Heart left ventricle (tissue), 16 donors: ENCODE measurements at regions of chr3 and their contacts with region 1.

Region 1: DNA sequence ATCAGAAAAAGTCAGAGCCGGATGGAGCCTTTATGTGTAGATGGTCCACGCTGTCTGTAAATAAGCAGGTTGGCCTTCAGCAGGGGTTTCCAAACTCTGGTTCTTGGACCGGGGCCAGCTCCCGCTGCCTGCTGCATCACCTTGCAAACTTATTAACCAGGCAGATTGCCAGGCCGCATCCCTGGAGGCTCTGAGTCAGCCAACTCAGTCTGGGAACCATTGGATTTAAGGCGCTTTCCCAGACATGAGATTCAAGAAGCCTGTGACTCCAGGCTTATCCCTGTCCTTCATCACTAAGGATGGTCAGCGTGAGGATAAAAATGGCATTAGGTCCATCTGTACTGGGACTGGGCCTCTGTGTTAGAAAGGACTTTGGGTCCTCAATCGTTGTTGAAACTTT is 212.5 kb downstream of the OPA1 start:
- DNase-seq: peak; percentile 87 to 92 (median 90)
- ATAC-seq: peak; percentile 64 to 94 (median 85)
- H3K4me3 ChIP-seq: no peak overlapping the region
- H3K27ac ChIP-seq: peak overlapping the region in 1 of 12 donors; percentile 16
- H3K4me1 ChIP-seq: peaks cover 0 to 16% (median 3%) of the 10 kb centered on the region in 12 donors
- H3K27me3 ChIP-seq: no peaks in the 10 kb centered on the region
- CTCF ChIP-seq: no peak
- POLR2A ChIP-seq: no peak

Region 2: GRCh38 chr3:193851941-193852674 is 46.6 kb after region 1 on chr3:
- intact Hi-C with region 1: loop called in 1 of 10 experiments (anchors 5 kb)
- DNase-seq: peak in 1 of 5 donors; percentile 42
- ATAC-seq: peak; percentile 47 to 58 (median 54)
- H3K4me3 ChIP-seq: no peak overlapping the region
- H3K27ac ChIP-seq: peak overlapping the region in 4 of 12 donors; percentile 11 to 32 (median 21)
- H3K4me1 ChIP-seq: peaks cover 0 to 29% (median 17%) of the 10 kb centered on the region in 12 donors
- H3K27me3 ChIP-seq: no peaks in the 10 kb centered on the region
- CTCF ChIP-seq: no peak
- POLR2A ChIP-seq: no peak

Region 3: GRCh38 chr3:193863657-193864357 is 58.3 kb after region 1 on chr3:
- intact Hi-C with region 1: loop called in 1 of 10 experiments (anchors 5 kb)
- DNase-seq: peak in 4 of 5 donors; percentile 50 to 67 (median 64)
- ATAC-seq: peak; percentile 85 to 92 (median 88)
- H3K4me3 ChIP-seq: no peak overlapping the region
- H3K27ac ChIP-seq: peak overlapping the region in 10 of 12 donors; percentile 3 to 71 (median 52)
- H3K4me1 ChIP-seq: peaks cover 0 to 46% (median 25%) of the 10 kb centered on the region in 12 donors
- H3K27me3 ChIP-seq: peaks cover 0 to under 1% (median 0%) of the 10 kb centered on the region in 9 donors
- CTCF ChIP-seq: no peak
- POLR2A ChIP-seq: no peak

Region 4: DNA sequence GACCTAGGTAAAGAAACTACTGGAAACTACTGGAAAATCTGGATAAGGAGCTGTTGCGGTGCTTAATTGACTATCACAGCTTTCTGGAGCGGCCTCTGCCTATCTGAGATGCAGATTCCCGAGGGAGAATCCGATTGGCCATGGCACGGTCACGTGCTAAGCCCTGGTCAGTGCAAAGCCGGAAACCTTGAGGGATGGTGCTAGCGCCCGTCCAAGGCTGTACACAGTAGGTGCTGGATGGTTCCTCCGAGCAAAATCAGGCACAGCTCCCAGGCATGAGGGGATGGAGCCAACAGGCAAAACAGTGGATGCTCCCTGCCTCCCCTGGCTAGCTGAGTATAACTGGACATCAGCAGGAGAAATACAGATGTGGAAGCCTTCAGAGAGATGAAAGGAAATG is 91.8 kb after region 1 on chr3:
- intact Hi-C with region 1: loop called in 1 of 10 experiments (anchors 5 kb)
- DNase-seq: peak in 4 of 5 donors; percentile 43 to 79 (median 55)
- ATAC-seq: peak in 3 of 4 donors; percentile 55 to 85 (median 74)
- H3K4me3 ChIP-seq: peak overlapping the region in 2 of 12 donors; percentile 15 to 16
- H3K27ac ChIP-seq: peak overlapping the region in 4 of 12 donors; percentile 2 to 34 (median 20)
- H3K4me1 ChIP-seq: peaks cover 0 to 26% (median 4%) of the 10 kb centered on the region in 12 donors
- H3K27me3 ChIP-seq: no peaks in the 10 kb centered on the region
- CTCF ChIP-seq: no peak
- POLR2A ChIP-seq: no peak

Region 5: GRCh38 chr3:194930377-194931204 is 1125.1 kb after region 1 on chr3:
- intact Hi-C with region 1: no loop called
- DNase-seq: peak in 4 of 5 donors; percentile 49 to 70 (median 58)
- ATAC-seq: peak; percentile 62 to 86 (median 78)
- H3K4me3 ChIP-seq: no peak overlapping the region
- H3K27ac ChIP-seq: peak overlapping the region; percentile 56 to 89 (median 74)
- H3K4me1 ChIP-seq: peaks cover 12 to 58% (median 32%) of the 10 kb centered on the region in 12 donors
- H3K27me3 ChIP-seq: no peaks in the 10 kb centered on the region
- CTCF ChIP-seq: no peak
- POLR2A ChIP-seq: no peak